MCF 10A (cell line): ENCODE measurements at regions of chr12 and their contacts with region 1.

Region 1: DNA sequence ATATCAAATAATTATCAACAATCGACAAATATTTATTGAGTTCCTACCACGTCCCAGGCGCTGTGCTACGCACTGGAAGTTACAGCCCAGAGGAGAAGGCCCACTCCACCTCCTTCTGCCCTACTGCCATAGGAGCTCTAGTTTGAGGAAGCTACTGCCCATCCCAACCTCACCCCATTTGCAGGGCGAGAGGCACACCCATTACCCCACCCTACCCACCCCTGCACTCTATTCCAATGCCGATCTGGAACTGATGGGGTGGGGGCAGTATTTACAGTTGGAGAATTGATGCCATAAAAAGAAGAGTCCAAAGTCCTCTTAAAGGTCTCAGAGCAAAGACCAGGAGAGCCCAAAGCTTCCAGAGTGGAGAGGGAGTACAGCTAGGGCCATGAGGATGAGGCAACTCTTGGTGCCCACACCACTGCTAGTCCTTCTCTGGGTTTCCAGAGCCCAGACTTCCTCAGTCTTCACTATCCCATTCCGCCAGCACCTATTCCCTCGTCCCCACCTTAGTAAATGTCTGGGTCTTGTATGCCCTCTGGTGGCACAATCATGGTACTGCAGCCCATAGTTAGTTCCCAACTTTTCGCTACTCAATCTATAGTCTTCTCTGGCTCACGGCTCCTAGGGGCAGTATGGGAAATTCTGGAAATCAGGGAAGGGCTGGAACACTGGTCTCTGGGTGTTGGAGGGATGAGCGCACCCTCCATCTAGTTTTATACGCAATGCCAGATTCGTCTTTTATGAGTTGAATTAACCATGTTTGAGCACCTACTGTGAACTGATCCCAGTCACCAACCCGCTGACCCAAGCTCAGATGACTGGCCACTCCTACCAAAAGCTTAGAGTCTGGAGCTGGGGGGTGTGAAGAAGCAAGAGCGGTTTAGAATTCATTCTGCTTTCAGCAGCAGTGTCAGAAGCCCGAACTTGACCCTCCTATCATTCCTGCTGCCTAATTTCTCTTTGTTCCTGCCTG is 6.9 kb upstream of the ADCY6 start:
- DNase-seq: peak; percentile 86
- H3K4me3 Mint-ChIP-seq: no peak overlapping the region
- H3K27ac Mint-ChIP-seq: no peak overlapping the region
- H3K4me1 Mint-ChIP-seq: peaks cover 9% of the 10 kb centered on the region
- H3K27me3 Mint-ChIP-seq: no peaks in the 10 kb centered on the region
- CTCF ChIP-seq: peak; percentile 88

Region 2: GRCh38 chr12:48542300-48542928 is 253.4 kb before region 1 on chr12:
- CTCF ChIA-PET with region 1: interaction called, 4 read pairs
- POLR2A ChIA-PET with region 1: no interaction called
- intact Hi-C with region 1: loop called (anchors 2 kb)
- DNase-seq: peak; percentile 73
- H3K4me3 Mint-ChIP-seq: no peak overlapping the region
- H3K27ac Mint-ChIP-seq: no peak overlapping the region
- H3K4me1 Mint-ChIP-seq: peaks cover 6% of the 10 kb centered on the region
- H3K27me3 Mint-ChIP-seq: peaks cover 18% of the 10 kb centered on the region
- CTCF ChIP-seq: peak; percentile 65

Region 3: DNA sequence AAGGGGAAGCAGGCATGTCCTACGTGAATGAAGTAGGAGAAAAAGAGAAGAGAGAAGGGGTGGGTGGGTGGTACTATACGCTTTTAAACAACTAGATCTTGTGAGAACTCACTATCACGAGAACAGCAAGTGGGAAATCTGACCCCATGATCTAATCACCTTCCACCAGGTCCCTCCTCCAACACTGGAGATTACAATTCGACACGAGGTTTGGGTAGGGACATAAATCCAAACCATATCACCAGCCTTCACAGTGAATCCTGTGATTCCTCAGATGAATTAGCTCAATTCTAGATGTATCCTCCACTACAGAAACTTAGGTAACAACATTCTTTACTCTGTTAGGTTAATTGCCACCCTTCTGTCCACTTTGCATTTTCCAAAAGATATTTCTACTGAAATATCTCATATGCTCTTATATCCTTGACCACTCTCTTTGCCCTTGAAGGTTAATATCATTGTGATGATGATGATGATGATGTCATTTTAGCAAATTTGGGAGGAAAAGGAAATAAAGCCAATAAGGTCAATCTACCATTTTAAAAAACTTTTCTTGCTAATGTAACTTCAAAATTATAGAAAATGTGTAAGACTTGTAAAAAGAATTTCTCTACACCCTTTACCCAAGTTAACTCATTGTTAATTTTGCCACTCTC is 56.0 kb before region 1 on chr12:
- CTCF ChIA-PET with region 1: interaction called, 10 read pairs
- POLR2A ChIA-PET with region 1: interaction called, 3 read pairs
- intact Hi-C with region 1: no loop called
- DNase-seq: no peak
- H3K4me3 Mint-ChIP-seq: no peak overlapping the region
- H3K27ac Mint-ChIP-seq: no peak overlapping the region
- H3K4me1 Mint-ChIP-seq: no peaks in the 10 kb centered on the region
- H3K27me3 Mint-ChIP-seq: peaks cover 25% of the 10 kb centered on the region
- CTCF ChIP-seq: no peak

Region 4: DNA sequence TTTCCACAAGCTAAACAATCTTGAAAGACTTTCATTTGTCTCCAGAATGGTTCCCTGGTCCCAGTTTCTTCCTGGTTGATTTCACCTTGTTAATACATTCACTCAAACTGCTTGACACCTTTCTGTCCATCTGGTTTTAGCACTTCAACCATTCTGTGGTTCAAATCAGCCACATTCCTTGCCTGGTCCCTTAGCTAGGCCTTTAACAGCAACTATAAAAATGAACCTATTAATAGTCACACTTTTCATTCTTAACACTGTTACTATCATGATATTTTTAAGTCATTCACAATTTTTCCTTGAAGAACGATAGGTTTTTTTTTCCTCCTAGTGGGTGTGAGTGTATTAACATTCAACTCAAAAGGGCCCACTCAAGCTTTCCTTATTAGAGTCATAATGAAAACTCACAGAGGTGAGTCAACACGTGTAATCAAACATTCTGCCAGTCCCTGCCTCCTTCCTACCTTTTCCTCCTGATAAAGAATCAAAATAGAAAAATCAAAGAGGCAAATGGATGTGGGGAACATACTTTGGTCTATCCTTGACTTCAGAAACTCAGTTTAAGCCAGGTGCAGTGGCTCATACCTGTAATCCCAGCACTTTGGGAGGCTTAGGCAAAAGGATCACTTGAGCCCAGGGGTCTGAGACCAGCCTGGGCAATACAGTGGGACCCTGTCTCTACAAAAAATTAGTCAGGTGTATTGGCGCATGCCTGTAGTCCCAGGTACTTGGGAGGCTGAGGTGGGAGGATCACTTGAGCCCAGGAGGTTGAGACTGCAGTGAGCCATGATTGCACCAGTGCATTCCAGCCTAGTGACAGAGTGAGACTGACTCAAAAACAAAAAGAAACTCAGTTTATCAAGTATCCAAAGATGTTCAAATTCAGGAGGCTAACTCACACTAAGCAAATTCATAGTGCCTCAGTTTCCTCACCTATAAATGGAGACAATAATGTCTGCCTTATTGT is 44.7 kb before region 1 on chr12:
- CTCF ChIA-PET with region 1: interaction called, 241 read pairs
- POLR2A ChIA-PET with region 1: interaction called, 31 read pairs
- intact Hi-C with region 1: loop called (anchors 1 kb)
- DNase-seq: no peak
- H3K4me3 Mint-ChIP-seq: no peak overlapping the region
- H3K27ac Mint-ChIP-seq: no peak overlapping the region
- H3K4me1 Mint-ChIP-seq: no peaks in the 10 kb centered on the region
- H3K27me3 Mint-ChIP-seq: peaks cover 10% of the 10 kb centered on the region
- CTCF ChIP-seq: no peak

Region 5: GRCh38 chr12:48758221-48758620 is 37.5 kb before region 1 on chr12:
- CTCF ChIA-PET with region 1: interaction called, 241 read pairs
- POLR2A ChIA-PET with region 1: interaction called, 31 read pairs
- intact Hi-C with region 1: loop called (anchors 1 kb)
- DNase-seq: no peak
- H3K4me3 Mint-ChIP-seq: no peak overlapping the region
- H3K27ac Mint-ChIP-seq: no peak overlapping the region
- H3K4me1 Mint-ChIP-seq: no peaks in the 10 kb centered on the region
- H3K27me3 Mint-ChIP-seq: no peaks in the 10 kb centered on the region
- CTCF ChIP-seq: no peak

Region 6: GRCh38 chr12:48765753-48766162 is 30.0 kb before region 1 on chr12:
- CTCF ChIA-PET with region 1: interaction called, 12 read pairs
- POLR2A ChIA-PET with region 1: no interaction called
- intact Hi-C with region 1: no loop called
- DNase-seq: no peak
- H3K4me3 Mint-ChIP-seq: no peak overlapping the region
- H3K27ac Mint-ChIP-seq: no peak overlapping the region
- H3K4me1 Mint-ChIP-seq: no peaks in the 10 kb centered on the region
- H3K27me3 Mint-ChIP-seq: no peaks in the 10 kb centered on the region
- CTCF ChIP-seq: no peak

Region 7: DNA sequence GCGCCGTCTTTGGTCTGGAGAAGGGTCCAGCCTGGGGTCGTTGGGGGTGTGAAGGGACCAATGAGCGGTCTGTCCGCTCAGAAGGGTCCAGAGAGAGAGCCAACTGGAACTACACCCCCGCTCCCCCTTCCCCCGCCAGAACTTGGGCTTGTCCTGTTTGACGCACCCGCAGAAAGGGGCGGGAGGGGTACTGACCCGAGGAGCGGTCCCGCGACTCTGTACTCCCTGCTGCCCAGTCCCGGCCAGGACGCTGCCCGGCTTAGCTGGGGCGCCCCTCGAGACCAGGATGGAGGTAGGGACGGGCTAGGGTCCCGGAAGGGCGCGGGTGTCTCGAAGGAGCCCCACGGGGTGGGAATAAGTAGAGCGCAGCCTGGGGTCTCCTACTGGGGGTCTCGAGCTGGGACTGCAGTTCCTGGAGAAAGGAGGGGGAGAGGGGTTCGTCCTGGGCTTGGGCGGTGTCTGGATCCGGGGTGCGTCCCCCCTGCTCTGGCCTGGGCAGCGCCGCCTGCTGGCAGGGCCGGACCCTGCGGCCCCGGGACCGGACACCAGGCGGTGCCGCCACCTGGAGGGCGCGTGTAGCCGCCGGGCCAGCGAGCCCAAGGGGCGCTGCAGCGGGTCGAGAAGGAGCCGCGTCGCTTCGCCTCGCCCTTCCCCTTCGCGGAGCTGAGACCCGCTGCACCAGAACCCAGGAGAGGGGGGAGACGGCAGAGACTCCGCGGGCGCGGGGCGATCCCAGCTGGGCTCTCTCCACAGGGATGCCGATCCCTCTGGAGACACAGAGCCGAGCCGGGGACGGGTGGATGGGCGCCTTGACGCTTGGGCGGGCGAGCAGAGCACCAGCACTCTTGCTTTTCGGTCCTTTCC is 18.7 kb after region 1 on chr12:
- CTCF ChIA-PET with region 1: interaction called, 28 read pairs
- POLR2A ChIA-PET with region 1: interaction called, 5 read pairs
- intact Hi-C with region 1: no loop called
- DNase-seq: peak; percentile 77
- H3K4me3 Mint-ChIP-seq: peak overlapping the region; percentile 85
- H3K27ac Mint-ChIP-seq: peak overlapping the region; percentile 75
- H3K4me1 Mint-ChIP-seq: peaks cover 24% of the 10 kb centered on the region
- H3K27me3 Mint-ChIP-seq: no peaks in the 10 kb centered on the region
- CTCF ChIP-seq: peak; percentile 97